Activated T-helper 1 cell treated with anti-CD3 and anti-CD28 coated beads, Interleukin-12 subunit alpha, Interleukin-12 subunit beta, Interleukin-2, Interleukin-4 antibody, amounts not matched to agents 30 ng/mL and 10 ng/mL and 1 ng/mL, durations not matched to agents 14 hours and 24 hours and 36 hours (primary cell): ENCODE measurements at regions of chr1 and their contacts with region 1.

Region 1: GRCh38 chr1:203290261-203291089 is 14.8 kb upstream of the BTG2 start:
- DNase-seq: peak; percentile 96
- H3K4me3 Mint-ChIP-seq: peak overlapping the region; percentile 83
- H3K27ac Mint-ChIP-seq: peak overlapping the region; percentile 99
- H3K4me1 Mint-ChIP-seq: peaks cover 89% of the 10 kb centered on the region
- H3K27me3 Mint-ChIP-seq: no peaks in the 10 kb centered on the region

Region 2: GRCh38 chr1:203273206-203273868 is 17.1 kb before region 1 on chr1:
- intact Hi-C with region 1: loop called (anchors 1 kb)
- DNase-seq: peak; percentile 85
- H3K4me3 Mint-ChIP-seq: peak overlapping the region; percentile 72
- H3K27ac Mint-ChIP-seq: peak overlapping the region; percentile 79
- H3K4me1 Mint-ChIP-seq: peaks cover 58% of the 10 kb centered on the region
- H3K27me3 Mint-ChIP-seq: no peaks in the 10 kb centered on the region

Region 3: GRCh38 chr1:203304919-203305808 is 14.7 kb after region 1 on chr1 and contains the start of gene BTG2:
- intact Hi-C with region 1: loop called (anchors 1 kb)
- DNase-seq: peak; percentile 89
- H3K4me3 Mint-ChIP-seq: peak within 1 kb of the TSS; percentile 92
- H3K27ac Mint-ChIP-seq: peak within 1 kb of the TSS; percentile 93
- H3K4me1 Mint-ChIP-seq: peaks cover 61% of the 10 kb centered on the region
- H3K27me3 Mint-ChIP-seq: no peaks in the 10 kb centered on the region
- total RNA-seq, gene BTG2: 137 and 139 TPM in 2 replicates

Region 4: DNA sequence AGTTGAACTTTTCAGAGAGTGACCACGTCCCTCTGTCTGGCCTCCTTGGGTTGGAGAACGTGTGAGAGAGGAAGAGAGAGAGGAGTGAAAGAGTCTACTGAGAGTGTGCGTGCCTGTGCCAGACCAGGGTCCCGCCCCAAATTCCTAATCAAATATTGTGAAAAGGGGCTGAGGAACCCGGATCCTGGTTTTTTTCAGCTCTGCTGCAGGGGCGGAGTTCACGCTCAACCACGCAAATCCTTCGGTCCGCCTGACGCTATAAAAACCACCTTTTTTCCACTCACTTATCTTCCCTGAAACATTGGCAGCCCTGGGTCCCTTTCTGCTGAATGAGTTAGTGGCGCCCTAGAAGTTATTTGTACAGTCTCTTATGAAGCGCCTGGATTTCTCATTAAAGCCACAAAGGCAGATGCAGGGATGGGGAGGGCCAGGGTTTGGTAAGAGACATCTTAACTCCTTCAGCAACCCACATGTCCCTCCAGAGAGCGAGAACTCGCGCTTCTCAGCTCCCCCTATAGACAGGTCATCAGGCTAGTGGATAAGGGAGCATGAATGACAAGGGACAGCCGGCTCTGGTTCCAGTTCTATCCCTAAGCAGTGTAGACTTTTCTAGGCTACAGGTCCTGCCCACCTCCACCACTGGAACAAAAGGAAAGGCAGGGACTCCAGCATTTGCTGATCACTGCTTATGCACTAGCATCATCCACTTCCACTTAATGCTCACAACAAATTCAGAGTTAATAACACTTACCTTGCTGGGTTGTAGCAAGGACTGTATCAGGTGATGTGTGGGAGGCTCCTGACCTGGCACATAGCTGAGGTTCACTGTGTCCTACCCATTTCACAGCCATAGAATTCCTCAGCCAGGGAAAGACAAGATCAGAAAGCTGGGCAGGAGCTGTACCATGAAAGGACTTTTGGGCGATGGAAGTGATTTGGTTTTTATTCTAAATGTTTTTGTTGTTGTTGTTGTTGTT is 60.9 kb after region 1 on chr1 and contains the start of gene FMOD:
- intact Hi-C with region 1: no loop called
- DNase-seq: no peak
- H3K4me3 Mint-ChIP-seq: peak within 1 kb of the TSS; percentile 43
- H3K27ac Mint-ChIP-seq: peak within 1 kb of the TSS; percentile 29
- H3K4me1 Mint-ChIP-seq: peaks cover 6% of the 10 kb centered on the region
- H3K27me3 Mint-ChIP-seq: peaks cover 18% of the 10 kb centered on the region
- total RNA-seq, gene FMOD: 3.4 and 4.1 TPM in 2 replicates

Region 5: GRCh38 chr1:203584035-203584434 is 293.6 kb after region 1 on chr1:
- intact Hi-C with region 1: no loop called
- DNase-seq: no peak
- H3K4me3 Mint-ChIP-seq: no peak overlapping the region
- H3K27ac Mint-ChIP-seq: no peak overlapping the region
- H3K4me1 Mint-ChIP-seq: no peaks in the 10 kb centered on the region
- H3K27me3 Mint-ChIP-seq: peaks cover 18% of the 10 kb centered on the region

Region 6: DNA sequence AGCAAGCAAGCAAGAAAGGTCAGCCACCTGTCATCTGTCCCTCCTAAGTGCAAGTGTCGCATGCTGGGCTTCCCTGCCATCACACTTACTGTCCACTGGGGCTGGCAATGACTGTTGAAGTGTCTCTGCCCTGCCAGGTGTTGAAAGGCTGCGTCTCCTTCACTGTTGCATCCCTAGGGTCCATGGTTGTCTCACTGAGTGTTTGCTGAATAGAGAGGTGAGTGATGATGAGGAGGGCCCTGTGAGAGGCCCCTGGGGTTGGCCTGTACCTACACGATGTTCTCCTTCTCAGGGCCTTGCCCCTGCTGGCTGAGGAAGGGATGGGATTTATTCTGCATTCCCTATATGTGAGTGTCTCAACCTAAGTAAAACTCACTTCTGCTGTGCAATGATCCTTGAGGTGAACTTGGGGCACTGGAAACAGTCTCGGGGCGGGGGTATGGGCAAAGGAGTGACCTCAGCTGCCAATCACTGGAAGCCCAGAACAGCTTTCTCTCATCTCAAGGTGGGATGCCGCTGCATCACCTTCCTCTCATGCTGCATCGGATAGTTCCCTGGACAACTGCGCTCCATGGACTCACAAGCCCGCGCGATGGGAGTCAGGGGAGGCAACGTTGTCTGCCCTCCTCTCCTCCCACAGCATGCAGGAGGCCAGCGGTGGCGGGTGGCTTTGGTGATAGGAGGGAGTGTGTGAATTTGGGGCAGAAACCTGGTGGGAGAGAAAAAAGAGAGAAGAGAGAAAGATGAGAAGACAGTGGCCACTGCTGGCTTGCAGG is 746.6 kb after region 1 on chr1:
- intact Hi-C with region 1: no loop called
- DNase-seq: no peak
- H3K4me3 Mint-ChIP-seq: no peak overlapping the region
- H3K27ac Mint-ChIP-seq: no peak overlapping the region
- H3K4me1 Mint-ChIP-seq: no peaks in the 10 kb centered on the region
- H3K27me3 Mint-ChIP-seq: peaks cover 5% of the 10 kb centered on the region

Region 7: DNA sequence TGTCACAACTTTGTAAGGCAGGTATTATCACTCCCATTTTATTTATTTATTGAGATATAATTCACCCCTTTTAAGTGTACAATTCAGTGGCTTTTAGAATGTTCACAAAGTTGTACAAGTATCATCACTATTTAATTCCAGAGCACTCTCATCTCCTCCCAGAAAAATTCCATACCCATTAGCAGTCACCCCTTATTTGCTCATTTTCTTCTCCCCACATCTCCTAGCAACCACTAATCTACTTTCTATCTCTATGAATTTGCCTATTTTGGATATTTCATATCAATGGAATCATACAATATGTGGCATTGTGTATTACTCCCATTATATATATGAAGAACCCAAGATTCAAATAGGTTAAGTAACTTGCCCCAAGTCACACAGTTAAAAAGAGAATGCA is 1914.1 kb after region 1 on chr1:
- intact Hi-C with region 1: loop called (anchors 10 kb)
- DNase-seq: no peak
- H3K4me3 Mint-ChIP-seq: peak overlapping the region; percentile 63
- H3K27ac Mint-ChIP-seq: peak overlapping the region; percentile 76
- H3K4me1 Mint-ChIP-seq: peaks cover 60% of the 10 kb centered on the region
- H3K27me3 Mint-ChIP-seq: no peaks in the 10 kb centered on the region